Left cardiac atrium (tissue), 4 donors: ENCODE measurements at regions of chr11 and their contacts with region 1.

Region 1: DNA sequence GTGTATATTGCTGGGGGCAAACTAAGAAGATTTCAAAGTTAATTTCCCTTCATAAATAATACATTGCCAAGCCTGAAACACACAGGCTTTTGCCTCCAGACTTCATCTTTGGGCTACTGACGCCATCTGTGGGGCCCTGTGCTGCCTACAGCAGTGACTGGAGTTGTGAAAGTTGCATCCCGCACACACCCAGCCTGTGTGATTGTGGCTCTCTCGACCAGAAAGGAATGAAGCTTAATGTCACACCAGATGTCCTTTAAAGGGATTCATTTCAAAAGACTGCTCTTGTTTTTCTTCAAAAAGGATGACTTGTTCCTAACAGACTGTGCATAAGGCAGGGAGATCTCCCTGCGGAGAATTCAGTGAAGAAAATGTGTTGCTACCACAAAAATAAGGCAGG is 210.5 kb downstream of the FAM181B start:
- DNase-seq: no peak
- ATAC-seq: no peak

Region 2: GRCh38 chr11:81644239-81644840 is 878.8 kb before region 1 on chr11:
- intact Hi-C with region 1: loop called in 1 of 2 experiments (anchors 5 kb)
- DNase-seq: no peak
- ATAC-seq: no peak

Region 3: DNA sequence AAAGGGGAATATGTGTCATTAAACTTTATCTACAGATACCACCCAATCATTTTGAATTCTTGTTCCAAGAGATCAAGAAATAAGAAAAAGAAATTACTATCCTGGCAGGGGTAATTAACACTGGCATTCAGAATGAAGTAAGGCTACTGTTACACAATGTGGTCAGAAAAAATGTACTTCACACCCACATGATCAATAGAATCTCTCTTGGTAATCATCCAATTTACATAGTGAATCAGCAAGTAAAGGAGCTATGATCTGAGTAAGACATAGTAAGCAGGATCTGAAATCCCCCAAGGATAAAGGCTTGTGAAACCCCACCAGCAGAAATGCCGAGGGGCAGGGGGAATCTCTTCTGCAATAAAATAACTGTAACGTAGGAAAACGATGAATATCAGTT is 256.0 kb before region 1 on chr11:
- intact Hi-C with region 1: no loop called
- DNase-seq: no peak
- ATAC-seq: no peak

Region 4: GRCh38 chr11:82315093-82315492 is 208.0 kb before region 1 on chr11:
- intact Hi-C with region 1: loop called in 1 of 2 experiments (anchors 2 kb)
- DNase-seq: no peak
- ATAC-seq: no peak